MCF 10A (cell line): ENCODE measurements at regions of chr1 and their contacts with region 1.

Region 1: GRCh38 chr1:151113877-151114276 is 32.6 kb downstream of the SEMA6C start:
- DNase-seq: no peak
- H3K4me3 Mint-ChIP-seq: no peak overlapping the region
- H3K27ac Mint-ChIP-seq: no peak overlapping the region
- H3K4me1 Mint-ChIP-seq: no peaks in the 10 kb centered on the region
- H3K27me3 Mint-ChIP-seq: no peaks in the 10 kb centered on the region
- CTCF ChIP-seq: no peak

Region 2: DNA sequence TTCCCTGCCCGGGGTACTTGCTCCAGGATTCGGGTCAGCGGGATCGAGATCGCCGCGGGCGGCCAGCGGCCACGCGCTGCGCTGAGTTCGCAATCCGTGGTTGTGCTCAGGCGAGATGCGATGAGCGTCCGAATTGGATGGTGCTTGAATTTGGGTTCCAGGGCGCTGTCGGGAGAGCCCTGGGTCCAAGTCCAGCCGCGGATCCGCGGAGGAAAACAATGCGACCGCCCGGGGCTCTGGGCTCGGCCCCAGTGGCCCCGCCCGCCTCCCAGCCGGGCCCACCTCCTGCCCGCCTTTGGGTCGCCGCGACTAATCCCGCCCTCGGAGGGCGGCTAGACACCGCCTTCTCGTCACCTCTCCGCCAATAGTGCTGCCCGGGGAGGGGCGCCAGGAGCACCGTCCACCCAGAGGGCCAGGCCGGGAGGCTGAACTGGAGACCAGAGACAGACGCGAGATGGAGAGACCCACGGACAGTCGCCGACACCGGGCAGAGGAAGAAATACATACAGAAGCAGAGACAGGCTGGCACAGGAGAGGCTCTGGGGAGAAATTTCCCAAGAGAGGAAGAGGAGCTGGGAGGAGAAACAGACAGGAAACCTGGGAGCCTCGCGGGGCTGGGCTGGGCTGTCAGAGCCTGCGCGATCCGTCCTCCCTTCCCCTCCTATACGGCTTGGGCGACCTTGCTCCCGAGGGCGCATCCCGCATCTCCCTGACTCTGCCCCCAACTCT is 32.7 kb after region 1 on chr1 and contains the start of gene SEMA6C:
- CTCF ChIA-PET with region 1: interaction called, 3 read pairs
- POLR2A ChIA-PET with region 1: no interaction called
- intact Hi-C with region 1: loop called (anchors 1 kb)
- DNase-seq: peak; percentile 96
- H3K4me3 Mint-ChIP-seq: peak within 1 kb of the TSS; percentile 73
- H3K27ac Mint-ChIP-seq: peak within 1 kb of the TSS; percentile 13
- H3K4me1 Mint-ChIP-seq: peaks cover 10% of the 10 kb centered on the region
- H3K27me3 Mint-ChIP-seq: no peaks in the 10 kb centered on the region
- CTCF ChIP-seq: no peak
- total RNA-seq, gene SEMA6C: 2.3 and 9.5 TPM in 2 replicates